ENCODE measurements at regions of chr1 and their contacts with region 1.

Region 1: GRCh38 chr1:27430903-27431600 is 38.6 kb downstream of the GPR3 start:
- DNase-seq: peak; percentile 47 to 72 (median 66)
- H3K4me3 ChIP-seq: peak overlapping the region in 1 of 3 experiments; percentile 66
- H3K4me3 Mint-ChIP-seq: peak overlapping the region in 1 of 2 donors; percentile 80
- H3K27ac ChIP-seq: peak overlapping the region; percentile 15 to 85
- H3K27ac Mint-ChIP-seq: peak overlapping the region; percentile 90 to 96 (median 93)
- H3K4me1 ChIP-seq: peaks cover 99 to 100% of the 10 kb centered on the region in 2 donors
- H3K4me1 Mint-ChIP-seq: peaks cover 89% of the 10 kb centered on the region
- H3K27me3 ChIP-seq: no peaks in the 10 kb centered on the region
- H3K27me3 Mint-ChIP-seq: peaks cover 0 to 1% (median 0%) of the 10 kb centered on the region in 3 donors
- CTCF ChIP-seq: no peak

Region 2: DNA sequence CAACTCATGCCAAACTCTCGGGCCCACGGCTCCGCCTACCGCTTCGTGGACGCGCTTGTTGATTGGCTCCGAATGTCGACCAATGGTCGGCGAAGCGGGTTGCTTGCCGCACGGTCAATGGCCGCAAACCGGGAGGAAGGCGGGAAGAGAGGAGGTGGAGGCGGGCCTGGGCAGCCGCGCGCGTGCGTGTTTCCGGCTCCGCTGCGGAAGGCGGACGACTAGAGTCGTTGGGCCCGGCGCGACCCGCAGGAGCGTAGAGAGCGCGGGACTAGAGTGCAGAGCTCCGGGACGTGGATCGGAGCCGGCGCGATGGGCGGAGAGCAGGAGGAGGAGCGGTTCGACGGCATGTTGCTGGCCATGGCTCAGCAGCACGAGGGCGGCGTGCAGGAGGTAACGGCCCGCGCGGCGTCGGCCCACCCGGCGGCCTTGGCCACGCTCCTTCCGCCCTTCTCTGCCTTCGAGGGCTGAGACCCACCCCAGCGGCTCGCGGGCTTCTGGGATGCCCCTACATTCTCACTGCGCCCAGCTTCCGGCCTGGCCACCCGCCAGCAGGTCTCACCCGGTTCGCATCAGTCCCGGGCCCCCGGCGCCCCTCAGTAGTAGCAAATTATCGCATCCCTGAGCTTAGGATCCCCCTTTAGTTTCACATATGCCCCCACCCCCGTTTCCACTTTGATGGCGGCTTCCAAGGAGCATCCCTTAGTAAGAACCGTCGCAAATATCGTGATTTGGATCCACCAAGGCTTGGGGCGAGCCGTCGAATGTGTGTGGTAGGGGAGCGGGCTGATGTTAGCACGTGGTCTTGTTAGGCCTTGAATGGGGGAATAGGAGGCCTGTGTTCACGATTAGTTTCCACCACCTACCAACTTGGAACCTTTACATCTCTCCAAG is 509.3 kb before region 1 on chr1 and contains the start of gene NUDC:
- intact Hi-C with region 1: no loop called
- DNase-seq: peak; percentile 95 to 96 (median 95)
- H3K4me3 ChIP-seq: peak within 1 kb of the TSS; percentile 74 to 88 (median 78)
- H3K4me3 Mint-ChIP-seq: peak within 1 kb of the TSS; percentile 91 to 96
- H3K27ac ChIP-seq: peak within 1 kb of the TSS; percentile 11 to 83
- H3K27ac Mint-ChIP-seq: peak within 1 kb of the TSS; percentile 87 to 95 (median 92)
- H3K4me1 ChIP-seq: peaks cover 15 to 21% of the 10 kb centered on the region in 2 donors
- H3K4me1 Mint-ChIP-seq: peaks cover 20% of the 10 kb centered on the region
- H3K27me3 ChIP-seq: no peaks in the 10 kb centered on the region
- H3K27me3 Mint-ChIP-seq: peaks cover 0 to 3% (median 3%) of the 10 kb centered on the region in 3 donors
- CTCF ChIP-seq: no peak
- polyA plus RNA-seq, gene NUDC: 28.3 to 58.3 (median 47.4) TPM

Region 3: DNA sequence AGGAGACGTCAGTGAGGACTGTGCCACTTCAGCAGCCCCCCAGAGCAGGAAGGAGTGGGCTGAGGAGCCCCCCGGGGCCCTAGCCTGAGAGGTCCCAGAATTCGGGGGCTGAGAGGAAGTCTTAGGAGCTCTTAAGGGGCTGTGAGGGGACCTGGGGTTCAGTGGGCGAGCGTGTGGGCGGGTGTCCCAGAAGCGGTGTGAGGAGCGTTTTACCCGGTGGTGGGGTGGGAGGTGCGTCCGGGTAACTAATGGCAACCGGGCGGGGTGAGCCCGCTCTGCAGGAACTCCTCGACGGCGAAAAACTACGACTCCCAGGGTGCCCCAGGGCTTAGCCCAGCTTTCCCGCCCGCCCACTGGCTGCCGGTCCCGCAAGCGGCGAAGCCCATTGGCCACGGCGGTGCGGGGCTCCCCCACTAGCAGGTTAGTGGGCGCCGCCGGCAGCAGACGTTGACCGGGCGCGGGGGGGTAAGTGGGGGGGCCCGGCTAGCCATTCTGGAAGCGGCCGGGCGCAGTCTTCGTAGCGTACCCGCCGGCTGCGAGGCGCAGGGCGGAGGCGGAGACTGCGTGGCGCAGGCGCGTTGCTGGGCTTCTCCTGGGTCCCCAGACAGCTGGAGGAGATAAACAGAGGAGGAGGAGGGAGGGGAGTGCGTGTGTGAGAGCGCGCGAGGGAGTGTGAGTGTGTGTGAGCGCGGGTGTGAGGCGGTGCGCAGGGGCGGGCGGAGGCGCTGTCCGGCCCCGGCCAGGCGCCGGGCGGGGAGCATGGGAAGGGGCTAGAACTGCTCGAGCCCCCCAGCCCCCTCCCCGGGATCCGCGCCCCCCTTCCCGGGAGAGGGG is 196.8 kb before region 1 on chr1 and contains the start of gene WDTC1:
- intact Hi-C with region 1: no loop called
- DNase-seq: peak; percentile 95 to 97 (median 96)
- H3K4me3 ChIP-seq: peak within 1 kb of the TSS; percentile 50 to 94 (median 81)
- H3K4me3 Mint-ChIP-seq: peak within 1 kb of the TSS; percentile 99
- H3K27ac ChIP-seq: peak within 1 kb of the TSS in 1 of 2 donors; percentile 68
- H3K27ac Mint-ChIP-seq: peak within 1 kb of the TSS; percentile 82 to 98 (median 92)
- H3K4me1 ChIP-seq: peaks cover 18 to 29% of the 10 kb centered on the region in 2 donors
- H3K4me1 Mint-ChIP-seq: peaks cover 31% of the 10 kb centered on the region
- H3K27me3 ChIP-seq: no peaks in the 10 kb centered on the region
- H3K27me3 Mint-ChIP-seq: peaks cover 0 to 3% (median 0%) of the 10 kb centered on the region in 3 donors
- CTCF ChIP-seq: no peak
- polyA plus RNA-seq, gene WDTC1: 2.1 to 26.6 (median 4.3) TPM

Region 4: GRCh38 chr1:27402349-27402754 is 28.7 kb before region 1 on chr1:
- intact Hi-C with region 1: no loop called
- DNase-seq: peak; percentile 50 to 64 (median 56)
- H3K4me3 ChIP-seq: no peak overlapping the region
- H3K4me3 Mint-ChIP-seq: no peak overlapping the region
- H3K27ac ChIP-seq: peak overlapping the region in 1 of 2 donors; percentile 33
- H3K27ac Mint-ChIP-seq: peak overlapping the region in 3 of 7 donors; percentile 30 to 77 (median 69)
- H3K4me1 ChIP-seq: peaks cover 26 to 32% of the 10 kb centered on the region in 2 donors
- H3K4me1 Mint-ChIP-seq: peaks cover 38% of the 10 kb centered on the region
- H3K27me3 ChIP-seq: no peaks in the 10 kb centered on the region
- H3K27me3 Mint-ChIP-seq: peaks cover 0 to 5% (median 2%) of the 10 kb centered on the region in 3 donors
- CTCF ChIP-seq: peak; percentile 66

Region 5: DNA sequence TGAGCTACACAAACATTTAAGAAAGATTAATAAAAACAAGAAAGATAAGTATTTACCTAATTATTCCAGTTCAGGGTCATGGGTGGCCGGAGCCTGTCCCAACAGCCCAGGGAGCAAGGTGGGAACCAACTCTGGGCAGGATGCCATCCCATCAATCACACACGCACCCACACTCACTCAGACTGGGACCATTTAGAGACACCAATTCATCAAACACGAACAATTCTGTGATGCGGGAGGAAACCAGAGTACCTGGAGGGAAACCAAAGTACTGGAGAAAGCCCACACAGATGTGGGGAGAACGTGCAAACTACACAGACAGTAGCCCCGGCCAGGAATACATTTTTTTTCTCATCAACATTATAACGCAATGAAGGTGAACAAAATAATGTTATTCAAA is 42.7 kb after region 1 on chr1:
- intact Hi-C with region 1: loop called in 1 of 2 experiments (anchors 10 kb)
- DNase-seq: no peak
- H3K4me3 ChIP-seq: no peak overlapping the region
- H3K4me3 Mint-ChIP-seq: peak overlapping the region in 1 of 2 donors; percentile 6
- H3K27ac ChIP-seq: peak overlapping the region in 1 of 2 donors; percentile 49
- H3K27ac Mint-ChIP-seq: peak overlapping the region in 4 of 7 donors; percentile 26 to 69 (median 42)
- H3K4me1 ChIP-seq: peaks cover 47 to 75% of the 10 kb centered on the region in 2 donors
- H3K4me1 Mint-ChIP-seq: peaks cover 81% of the 10 kb centered on the region
- H3K27me3 ChIP-seq: no peaks in the 10 kb centered on the region
- H3K27me3 Mint-ChIP-seq: peaks cover 0 to 4% (median 0%) of the 10 kb centered on the region in 3 donors
- CTCF ChIP-seq: no peak

Region 6: DNA sequence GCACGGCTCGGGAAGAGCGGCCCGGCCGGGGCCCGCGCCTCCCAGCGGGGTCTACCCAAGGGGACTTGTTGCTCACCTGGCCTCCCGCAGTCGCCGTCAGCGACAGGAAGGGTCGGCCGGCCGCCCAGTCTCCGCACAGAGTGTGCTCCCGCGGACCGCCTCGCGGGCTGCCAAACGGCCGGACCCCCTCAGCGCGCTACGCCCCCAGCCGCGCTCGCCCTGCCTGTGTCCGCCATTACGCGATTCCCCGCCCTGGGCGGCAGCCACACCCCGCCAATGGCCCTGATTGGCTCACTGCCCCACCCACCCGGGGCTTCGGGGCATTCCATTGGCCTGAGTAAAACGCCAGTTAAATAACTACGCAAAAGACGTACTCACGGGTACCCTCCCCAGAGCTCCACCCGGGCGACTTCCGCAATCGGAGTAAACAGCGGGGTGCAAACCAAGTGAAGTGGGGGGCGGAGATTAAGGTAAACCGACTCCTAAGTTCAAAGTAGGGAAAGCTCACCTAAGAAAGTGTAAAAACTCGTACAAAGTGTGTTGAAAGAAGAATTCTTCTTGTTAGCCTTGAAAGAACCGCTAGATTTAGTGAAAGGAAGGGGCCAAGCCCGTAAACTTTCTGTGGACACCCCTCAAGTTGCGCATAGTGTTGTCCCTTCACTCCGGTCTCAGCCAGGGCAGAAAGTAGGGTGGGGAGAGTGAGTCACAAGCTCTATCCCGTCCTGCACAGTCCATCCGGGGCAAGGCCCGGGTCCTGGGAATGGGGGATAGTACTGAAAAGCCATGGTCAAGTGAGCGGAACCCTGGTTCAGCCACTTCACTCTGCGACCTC is 59.1 kb after region 1 on chr1 and contains the start of gene WASF2:
- intact Hi-C with region 1: loop called (anchors 5 to 10 kb)
- DNase-seq: peak; percentile 96 to 97 (median 97)
- H3K4me3 ChIP-seq: peak within 1 kb of the TSS; percentile 78 to 99 (median 99)
- H3K4me3 Mint-ChIP-seq: peak within 1 kb of the TSS; percentile 91 to 99
- H3K27ac ChIP-seq: peak within 1 kb of the TSS; percentile 88 to 99
- H3K27ac Mint-ChIP-seq: peak within 1 kb of the TSS; percentile 96 to 100 (median 99)
- H3K4me1 ChIP-seq: peaks cover 31 to 45% of the 10 kb centered on the region in 2 donors
- H3K4me1 Mint-ChIP-seq: peaks cover 45% of the 10 kb centered on the region
- H3K27me3 ChIP-seq: no peaks in the 10 kb centered on the region
- H3K27me3 Mint-ChIP-seq: peaks cover 0 to 6% (median 0%) of the 10 kb centered on the region in 3 donors
- CTCF ChIP-seq: no peak
- polyA plus RNA-seq, gene WASF2: 53.5 to 91.6 (median 86.4) TPM

Measured in CD14-positive monocyte (primary cell).